Calu3 (cell line): ENCODE measurements at regions of chr11 and their contacts with region 1.

Region 1: GRCh38 chr11:32176223-32176934 is 85.5 kb downstream of the RCN1 start:
- DNase-seq: peak; percentile 85
- H3K4me3 Mint-ChIP-seq: no peak overlapping the region
- H3K27ac Mint-ChIP-seq: no peak overlapping the region
- H3K4me1 Mint-ChIP-seq: peaks cover 7% of the 10 kb centered on the region
- H3K27me3 Mint-ChIP-seq: peaks cover 54% of the 10 kb centered on the region
- CTCF ChIP-seq: peak; percentile 74

Region 2: GRCh38 chr11:31107062-31107461 is 1069.3 kb before region 1 on chr11:
- CTCF ChIA-PET with region 1: interaction called, 5 read pairs
- intact Hi-C with region 1: loop called (anchors 5 kb)
- DNase-seq: peak; percentile 73
- H3K4me3 Mint-ChIP-seq: no peak overlapping the region
- H3K27ac Mint-ChIP-seq: no peak overlapping the region
- H3K4me1 Mint-ChIP-seq: no peaks in the 10 kb centered on the region
- H3K27me3 Mint-ChIP-seq: no peaks in the 10 kb centered on the region
- CTCF ChIP-seq: peak; percentile 78

Region 3: GRCh38 chr11:31397239-31397834 is 779.0 kb before region 1 on chr11:
- CTCF ChIA-PET with region 1: no interaction called
- intact Hi-C with region 1: loop called (anchors 2 kb)
- DNase-seq: no peak
- H3K4me3 Mint-ChIP-seq: no peak overlapping the region
- H3K27ac Mint-ChIP-seq: no peak overlapping the region
- H3K4me1 Mint-ChIP-seq: no peaks in the 10 kb centered on the region
- H3K27me3 Mint-ChIP-seq: no peaks in the 10 kb centered on the region
- CTCF ChIP-seq: peak; percentile 22

Region 4: DNA sequence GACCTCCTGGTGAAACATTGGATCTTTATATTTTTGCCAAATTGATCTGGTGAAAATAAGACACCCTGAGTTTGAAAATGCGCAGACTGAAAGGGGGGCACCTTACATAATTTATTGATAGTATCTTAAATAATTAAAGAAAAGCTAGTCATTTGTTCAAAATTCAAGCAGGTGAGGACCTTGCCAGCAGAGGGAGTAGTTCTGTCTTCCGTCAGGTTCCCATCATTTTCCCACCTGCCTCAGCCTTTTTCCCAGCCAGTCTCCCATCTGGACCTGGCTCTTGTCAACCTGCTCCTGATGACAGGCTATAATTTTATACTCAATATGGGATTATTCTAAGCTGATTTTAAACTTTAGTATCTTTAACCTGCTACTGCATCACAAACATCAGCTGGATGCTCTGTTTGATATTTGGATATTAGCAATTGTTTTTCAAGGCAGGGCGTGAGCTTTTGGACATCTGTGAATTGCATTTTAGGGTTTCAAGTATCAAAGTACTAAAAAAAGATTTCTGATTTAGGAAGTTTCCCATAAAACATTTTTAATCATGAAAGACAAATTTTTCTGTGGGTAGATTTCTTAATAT is 534.8 kb before region 1 on chr11:
- CTCF ChIA-PET with region 1: no interaction called
- intact Hi-C with region 1: loop called (anchors 5 kb)
- DNase-seq: peak; percentile 55
- H3K4me3 Mint-ChIP-seq: no peak overlapping the region
- H3K27ac Mint-ChIP-seq: no peak overlapping the region
- H3K4me1 Mint-ChIP-seq: no peaks in the 10 kb centered on the region
- H3K27me3 Mint-ChIP-seq: no peaks in the 10 kb centered on the region
- CTCF ChIP-seq: peak; percentile 56

Region 5: DNA sequence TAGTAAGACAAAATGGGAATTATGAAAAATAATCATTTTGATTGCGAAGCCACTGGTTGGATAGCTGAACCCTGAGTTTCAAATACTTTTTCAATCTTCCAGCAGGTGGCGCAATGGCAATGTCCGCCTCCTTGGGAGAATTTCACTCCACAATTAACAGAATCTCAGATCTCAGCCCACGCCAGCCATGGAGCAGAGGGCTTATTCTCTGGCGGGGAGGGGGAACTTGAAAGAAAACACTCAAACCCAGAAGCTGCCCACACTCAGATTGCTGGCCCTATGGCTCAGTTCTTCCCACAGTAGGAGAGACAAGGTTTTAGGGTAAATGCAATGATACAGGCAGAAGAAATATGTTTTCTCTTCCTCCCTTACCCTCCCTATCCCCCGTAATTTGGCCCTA is 124.2 kb before region 1 on chr11:
- CTCF ChIA-PET with region 1: interaction called, 12 read pairs
- intact Hi-C with region 1: loop called (anchors 1 kb)
- DNase-seq: peak; percentile 64
- H3K4me3 Mint-ChIP-seq: no peak overlapping the region
- H3K27ac Mint-ChIP-seq: no peak overlapping the region
- H3K4me1 Mint-ChIP-seq: no peaks in the 10 kb centered on the region
- H3K27me3 Mint-ChIP-seq: peaks cover 92% of the 10 kb centered on the region
- CTCF ChIP-seq: peak; percentile 55